Naive thymus-derived CD4-positive, alpha-beta T cell (primary cell): ENCODE measurements at regions of chrX and their contacts with region 1.

Region 1: GRCh38 chrX:106894392-106894909 is 8.7 kb downstream of the RIPPLY1 start:
- DNase-seq: peak; percentile 13 to 57 (median 42)
- ATAC-seq: peak; percentile 74
- H3K4me3 ChIP-seq: no peak overlapping the region
- H3K4me3 Mint-ChIP-seq: no peak overlapping the region
- H3K27ac ChIP-seq: no peak overlapping the region
- H3K27ac Mint-ChIP-seq: no peak overlapping the region
- H3K4me1 ChIP-seq: no peaks in the 10 kb centered on the region
- H3K4me1 Mint-ChIP-seq: no peaks in the 10 kb centered on the region
- H3K27me3 ChIP-seq: no peaks in the 10 kb centered on the region
- H3K27me3 Mint-ChIP-seq: peaks cover 0 to 3% (median 0%) of the 10 kb centered on the region in 5 donors

Region 2: DNA sequence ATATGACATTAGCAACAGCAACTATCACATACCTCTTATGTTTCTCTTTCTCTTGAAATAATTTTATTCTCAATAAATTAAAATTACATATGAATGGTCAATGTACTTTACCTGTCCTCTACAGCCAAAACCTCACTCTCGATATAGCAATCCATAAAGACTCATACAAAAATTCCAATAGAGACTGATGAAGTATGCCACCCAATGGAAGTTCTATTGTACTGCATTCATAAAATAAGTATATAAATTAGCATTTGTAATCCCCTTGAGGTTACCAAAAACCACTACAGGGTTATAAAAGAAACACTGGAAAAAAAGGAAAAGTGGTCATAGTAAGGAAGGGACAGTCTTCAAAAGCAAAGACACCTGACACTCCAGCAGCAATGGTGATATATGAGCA is 58.5 kb after region 1 on chrX:
- CTCF ChIA-PET with region 1: interaction called, 4 read pairs
- POLR2A ChIA-PET with region 1: no interaction called
- intact Hi-C with region 1: loop called (anchors 1 to 2 kb)
- DNase-seq: no peak
- ATAC-seq: no peak
- H3K4me3 ChIP-seq: no peak overlapping the region
- H3K4me3 Mint-ChIP-seq: no peak overlapping the region
- H3K27ac ChIP-seq: no peak overlapping the region
- H3K27ac Mint-ChIP-seq: no peak overlapping the region
- H3K4me1 ChIP-seq: no peaks in the 10 kb centered on the region
- H3K4me1 Mint-ChIP-seq: no peaks in the 10 kb centered on the region
- H3K27me3 ChIP-seq: no peaks in the 10 kb centered on the region
- H3K27me3 Mint-ChIP-seq: no peaks in the 10 kb centered on the region

Region 3: GRCh38 chrX:107025545-107025944 is 131.1 kb after region 1 on chrX:
- CTCF ChIA-PET with region 1: no interaction called
- POLR2A ChIA-PET with region 1: no interaction called
- intact Hi-C with region 1: loop called in 1 of 2 experiments (anchors 10 kb)
- DNase-seq: peak in 5 of 9 donors; percentile 0 to 23 (median 3)
- ATAC-seq: no peak
- H3K4me3 ChIP-seq: no peak overlapping the region
- H3K4me3 Mint-ChIP-seq: no peak overlapping the region
- H3K27ac ChIP-seq: no peak overlapping the region
- H3K27ac Mint-ChIP-seq: no peak overlapping the region
- H3K4me1 ChIP-seq: no peaks in the 10 kb centered on the region
- H3K4me1 Mint-ChIP-seq: peaks cover 0 to 1% (median 0%) of the 10 kb centered on the region in 7 donors
- H3K27me3 ChIP-seq: no peaks in the 10 kb centered on the region
- H3K27me3 Mint-ChIP-seq: peaks cover 0 to 4% (median 0%) of the 10 kb centered on the region in 5 donors

Region 4: DNA sequence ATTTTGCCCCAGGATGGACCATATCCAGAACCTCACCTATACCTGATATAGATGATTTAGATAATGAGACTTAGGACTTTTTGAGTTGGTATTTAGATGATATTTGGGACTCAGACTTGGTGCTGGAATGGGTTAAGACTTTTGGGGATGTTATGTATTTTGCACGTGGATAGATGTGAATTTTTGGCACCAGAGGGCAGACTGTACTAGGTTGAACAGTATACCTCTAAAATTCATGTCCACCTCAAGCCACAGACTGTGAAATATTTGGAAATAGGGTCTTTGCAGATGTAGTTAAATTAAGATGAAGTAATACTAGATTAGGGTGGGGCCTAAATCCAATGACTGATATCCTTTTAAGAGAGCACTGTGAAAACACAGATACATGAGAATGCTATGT is 208.5 kb after region 1 on chrX:
- CTCF ChIA-PET with region 1: no interaction called
- POLR2A ChIA-PET with region 1: no interaction called
- intact Hi-C with region 1: loop called in 1 of 2 experiments (anchors 5 kb)
- DNase-seq: no peak
- ATAC-seq: no peak
- H3K4me3 ChIP-seq: no peak overlapping the region
- H3K4me3 Mint-ChIP-seq: no peak overlapping the region
- H3K27ac ChIP-seq: no peak overlapping the region
- H3K27ac Mint-ChIP-seq: no peak overlapping the region
- H3K4me1 ChIP-seq: no peaks in the 10 kb centered on the region
- H3K4me1 Mint-ChIP-seq: peaks cover 4 to 27% (median 14%) of the 10 kb centered on the region in 7 donors
- H3K27me3 ChIP-seq: no peaks in the 10 kb centered on the region
- H3K27me3 Mint-ChIP-seq: no peaks in the 10 kb centered on the region

Region 5: GRCh38 chrX:107324499-107325320 is 430.3 kb after region 1 on chrX:
- CTCF ChIA-PET with region 1: no interaction called
- POLR2A ChIA-PET with region 1: no interaction called
- intact Hi-C with region 1: loop called in 1 of 2 experiments (anchors 10 kb)
- DNase-seq: peak in 1 of 9 donors; percentile 19
- ATAC-seq: peak; percentile 16
- H3K4me3 ChIP-seq: no peak overlapping the region
- H3K4me3 Mint-ChIP-seq: no peak overlapping the region
- H3K27ac ChIP-seq: no peak overlapping the region
- H3K27ac Mint-ChIP-seq: no peak overlapping the region
- H3K4me1 ChIP-seq: no peaks in the 10 kb centered on the region
- H3K4me1 Mint-ChIP-seq: no peaks in the 10 kb centered on the region
- H3K27me3 ChIP-seq: no peaks in the 10 kb centered on the region
- H3K27me3 Mint-ChIP-seq: peaks cover 0 to 13% (median 2%) of the 10 kb centered on the region in 5 donors

Region 6: DNA sequence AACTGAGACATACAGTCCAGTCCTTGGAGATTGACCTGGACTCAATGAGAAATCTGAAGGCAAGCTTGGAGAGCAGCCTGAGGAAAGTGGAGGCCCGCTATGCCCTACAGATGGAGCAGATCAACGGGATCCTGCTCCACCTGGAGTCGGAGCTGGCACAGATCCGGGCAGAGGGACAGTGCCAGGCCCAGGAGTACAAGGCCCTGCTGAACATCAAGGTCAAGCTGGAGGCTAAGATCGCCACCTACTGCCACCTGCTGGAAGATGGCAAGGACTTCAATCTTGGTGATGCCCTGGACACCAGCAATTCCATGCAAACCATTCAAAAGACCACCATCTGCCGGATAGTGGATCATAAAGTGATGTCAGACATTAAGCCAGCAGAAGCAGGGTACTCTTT is 534.6 kb after region 1 on chrX:
- CTCF ChIA-PET with region 1: interaction called, 3 read pairs
- POLR2A ChIA-PET with region 1: no interaction called
- intact Hi-C with region 1: loop called in 1 of 2 experiments (anchors 1 kb)
- DNase-seq: peak in 3 of 9 donors; percentile 9 to 19 (median 9)
- ATAC-seq: no peak
- H3K4me3 ChIP-seq: no peak overlapping the region
- H3K4me3 Mint-ChIP-seq: no peak overlapping the region
- H3K27ac ChIP-seq: no peak overlapping the region
- H3K27ac Mint-ChIP-seq: no peak overlapping the region
- H3K4me1 ChIP-seq: no peaks in the 10 kb centered on the region
- H3K4me1 Mint-ChIP-seq: no peaks in the 10 kb centered on the region
- H3K27me3 ChIP-seq: no peaks in the 10 kb centered on the region
- H3K27me3 Mint-ChIP-seq: peaks cover 0 to 6% (median 0%) of the 10 kb centered on the region in 5 donors

Region 7: GRCh38 chrX:107894038-107894437 is 999.6 kb after region 1 on chrX:
- CTCF ChIA-PET with region 1: interaction called, 5 read pairs
- POLR2A ChIA-PET with region 1: no interaction called
- intact Hi-C with region 1: loop called (anchors 1 kb)
- DNase-seq: peak in 7 of 9 donors; percentile 30 to 68 (median 61)
- ATAC-seq: peak; percentile 72
- H3K4me3 ChIP-seq: no peak overlapping the region
- H3K4me3 Mint-ChIP-seq: no peak overlapping the region
- H3K27ac ChIP-seq: no peak overlapping the region
- H3K27ac Mint-ChIP-seq: peak overlapping the region in 3 of 9 donors; percentile 20 to 90 (median 52)
- H3K4me1 ChIP-seq: no peaks in the 10 kb centered on the region
- H3K4me1 Mint-ChIP-seq: peaks cover 0 to 8% (median 0%) of the 10 kb centered on the region in 7 donors
- H3K27me3 ChIP-seq: no peaks in the 10 kb centered on the region
- H3K27me3 Mint-ChIP-seq: no peaks in the 10 kb centered on the region